Activated T-helper 1 cell treated with anti-CD3 and anti-CD28 coated beads, Interleukin-12 subunit alpha, Interleukin-12 subunit beta, Interleukin-2, Interleukin-4 antibody, amounts not matched to agents 30 ng/mL and 10 ng/mL and 1 ng/mL, durations not matched to agents 14 hours and 24 hours and 36 hours (primary cell): ENCODE measurements at regions of chrX and their contacts with region 1.

Region 1: GRCh38 chrX:37976153-37976552 is 30.2 kb upstream of the SYTL5 start:
- DNase-seq: no peak
- H3K4me3 Mint-ChIP-seq: no peak overlapping the region
- H3K27ac Mint-ChIP-seq: no peak overlapping the region
- H3K4me1 Mint-ChIP-seq: peaks cover 19% of the 10 kb centered on the region
- H3K27me3 Mint-ChIP-seq: no peaks in the 10 kb centered on the region

Region 2: DNA sequence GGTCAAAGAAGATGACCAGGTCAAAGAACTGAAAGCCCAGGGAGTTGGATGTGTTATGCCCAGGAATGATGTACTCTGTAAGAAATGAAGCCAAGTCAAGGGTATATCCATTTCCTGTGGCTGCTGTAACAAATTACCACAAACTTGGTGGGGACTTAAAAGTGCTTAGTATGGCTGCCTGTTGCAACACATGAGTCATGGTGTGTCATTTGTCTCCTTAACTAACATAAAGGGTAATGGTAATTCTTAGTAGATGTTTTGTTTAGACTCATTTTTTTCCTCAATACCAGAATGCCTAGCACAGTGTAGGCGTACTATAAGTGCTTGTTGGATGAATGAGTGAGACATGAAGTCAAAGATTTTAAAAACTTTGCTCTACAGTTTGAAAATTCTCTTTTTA is 75.9 kb after region 1 on chrX:
- intact Hi-C with region 1: loop called (anchors 5 kb)
- DNase-seq: no peak
- H3K4me3 Mint-ChIP-seq: no peak overlapping the region
- H3K27ac Mint-ChIP-seq: no peak overlapping the region
- H3K4me1 Mint-ChIP-seq: no peaks in the 10 kb centered on the region
- H3K27me3 Mint-ChIP-seq: peaks cover 4% of the 10 kb centered on the region